ENCODE measurements at regions of chr15 and their contacts with region 1.

Region 1: DNA sequence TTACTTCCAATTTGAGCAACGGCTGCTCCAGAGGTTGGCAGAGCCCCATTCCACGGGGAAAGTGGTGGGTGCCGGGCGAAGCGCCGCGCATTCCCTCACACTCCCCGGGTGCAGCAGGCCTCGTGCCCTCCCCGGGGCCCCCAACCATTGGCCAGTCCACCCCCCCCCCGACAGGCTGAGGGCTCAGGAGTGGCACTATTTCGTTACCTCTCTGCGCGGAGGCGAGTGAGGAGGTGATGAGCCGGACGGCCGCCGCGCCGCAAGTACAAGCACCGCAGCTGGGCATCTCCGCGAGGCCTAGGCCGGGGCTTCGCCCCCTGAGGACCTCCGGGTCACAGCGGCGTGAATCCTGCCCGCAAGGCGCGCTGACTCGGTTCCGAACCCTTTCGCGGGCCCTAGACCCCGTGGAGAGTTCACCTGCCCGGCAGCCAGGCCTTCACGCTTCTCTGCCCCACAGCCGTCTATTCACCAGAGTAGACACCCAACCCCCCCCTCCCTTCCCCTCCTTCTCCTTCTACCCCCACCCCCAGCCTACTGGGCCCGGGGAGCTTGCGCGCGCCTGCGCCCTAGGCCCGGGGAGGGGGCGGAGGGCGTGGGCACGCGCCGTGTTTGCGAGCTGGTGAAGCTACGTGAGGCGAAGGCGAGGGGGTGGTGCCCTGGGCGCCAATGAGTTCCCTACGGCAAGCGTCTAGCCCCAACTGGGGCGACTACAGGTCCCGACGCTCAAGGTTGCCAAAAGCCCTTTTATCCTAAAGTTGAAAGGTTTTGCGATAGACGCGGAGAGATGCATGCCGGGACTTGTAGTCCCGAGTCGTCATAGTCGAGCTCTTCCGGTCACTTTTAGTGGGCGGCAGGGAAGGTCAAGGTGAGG is at the start of gene CLPX:
- DNase-seq: peak; percentile 96 to 97
- ATAC-seq: peak; percentile 98
- H3K4me3 ChIP-seq: peak within 1 kb of the TSS; percentile 86 to 90
- H3K27ac ChIP-seq: peak within 1 kb of the TSS; percentile 75 to 88
- H3K4me1 ChIP-seq: no peaks in the 10 kb centered on the region
- H3K27me3 ChIP-seq: no peaks in the 10 kb centered on the region
- total RNA-seq, gene CLPX: 33.4 to 43.9 TPM

Region 2: GRCh38 chr15:65245096-65245856 is 60.2 kb after region 1 on chr15:
- intact Hi-C with region 1: no loop called
- DNase-seq: peak; percentile 56 to 70
- ATAC-seq: no peak
- H3K4me3 ChIP-seq: no peak overlapping the region
- H3K27ac ChIP-seq: no peak overlapping the region
- H3K4me1 ChIP-seq: no peaks in the 10 kb centered on the region
- H3K27me3 ChIP-seq: no peaks in the 10 kb centered on the region

Region 3: DNA sequence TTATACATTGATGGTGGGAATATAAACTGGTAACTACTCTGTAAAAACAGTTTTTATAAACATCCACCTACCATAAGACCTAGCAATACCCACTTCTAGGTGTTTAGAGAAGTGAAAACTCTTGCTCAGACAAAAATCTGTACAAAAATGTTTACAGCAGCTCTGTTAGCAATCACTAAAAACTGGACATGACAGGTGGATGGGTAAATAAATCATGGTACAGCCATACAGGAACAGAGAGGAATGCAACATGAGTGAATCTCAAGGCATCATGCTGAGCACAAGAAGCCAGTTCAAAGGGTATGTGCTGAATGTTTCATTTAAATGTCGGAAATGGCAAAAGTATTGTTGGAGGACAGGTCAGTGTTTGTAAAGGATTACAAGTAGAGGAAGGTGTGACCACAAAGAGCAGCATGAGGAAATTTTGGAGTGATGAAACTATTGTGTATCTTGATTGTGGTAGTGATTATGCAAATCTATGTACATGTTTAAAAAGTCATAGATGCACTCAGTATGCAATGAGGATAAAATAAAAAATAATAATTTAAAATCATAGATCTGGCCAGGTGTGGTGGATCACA is 107.9 kb after region 1 on chr15:
- intact Hi-C with region 1: loop called (anchors 2 to 10 kb)
- DNase-seq: no peak
- ATAC-seq: no peak
- H3K4me3 ChIP-seq: no peak overlapping the region
- H3K27ac ChIP-seq: no peak overlapping the region
- H3K4me1 ChIP-seq: no peaks in the 10 kb centered on the region
- H3K27me3 ChIP-seq: no peaks in the 10 kb centered on the region

Region 4: GRCh38 chr15:65302061-65302460 is 117.0 kb after region 1 on chr15:
- intact Hi-C with region 1: loop called (anchors 2 to 10 kb)
- DNase-seq: peak in 1 of 2 donors; percentile 72
- ATAC-seq: no peak
- H3K4me3 ChIP-seq: no peak overlapping the region
- H3K27ac ChIP-seq: no peak overlapping the region
- H3K4me1 ChIP-seq: no peaks in the 10 kb centered on the region
- H3K27me3 ChIP-seq: no peaks in the 10 kb centered on the region

Measured in aorta (tissue), 5 donors.